Heart right ventricle (tissue), 16 donors: ENCODE measurements at regions of chr3 and their contacts with region 1.

Region 1: DNA sequence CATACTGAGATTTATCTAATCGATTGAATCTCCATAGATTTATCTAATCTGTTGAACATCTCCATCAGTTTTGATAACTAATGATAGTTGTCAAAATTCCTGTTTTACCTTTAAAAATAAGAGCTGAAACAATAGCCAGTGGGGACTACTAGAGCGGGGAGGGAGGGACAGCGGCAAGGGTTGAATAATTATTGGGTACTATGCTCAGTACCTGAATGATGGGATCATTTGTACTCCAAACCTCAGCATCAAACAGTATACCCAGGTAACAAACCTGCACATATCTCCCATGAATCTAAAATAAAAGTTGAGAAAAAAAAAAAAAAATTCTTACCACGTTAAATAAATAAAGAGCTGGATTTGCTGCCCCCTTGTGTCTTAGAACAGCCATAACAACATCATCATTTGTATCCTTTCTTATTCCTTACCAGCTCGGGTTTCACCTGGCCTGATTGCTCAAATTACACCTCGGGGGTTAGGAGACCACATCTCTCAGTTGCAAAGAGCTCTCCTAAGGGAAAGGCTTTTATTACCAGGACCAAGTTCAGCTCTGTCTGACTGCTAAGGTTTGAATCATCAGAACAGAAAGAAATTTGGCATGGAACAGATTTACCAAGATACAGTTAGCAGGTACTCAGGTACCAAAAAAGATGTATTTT is 25.7 kb upstream of the RPL39L start:
- DNase-seq: peak in 1 of 2 donors; percentile 45
- ATAC-seq: peak in 3 of 8 donors; percentile 38 to 52 (median 50)
- H3K4me3 ChIP-seq: no peak overlapping the region
- H3K27ac ChIP-seq: no peak overlapping the region
- H3K4me1 ChIP-seq: peaks cover 0 to 24% (median 4%) of the 10 kb centered on the region in 9 donors
- H3K27me3 ChIP-seq: no peaks in the 10 kb centered on the region
- CTCF ChIP-seq: peak; percentile 53 to 85 (median 78)

Region 2: DNA sequence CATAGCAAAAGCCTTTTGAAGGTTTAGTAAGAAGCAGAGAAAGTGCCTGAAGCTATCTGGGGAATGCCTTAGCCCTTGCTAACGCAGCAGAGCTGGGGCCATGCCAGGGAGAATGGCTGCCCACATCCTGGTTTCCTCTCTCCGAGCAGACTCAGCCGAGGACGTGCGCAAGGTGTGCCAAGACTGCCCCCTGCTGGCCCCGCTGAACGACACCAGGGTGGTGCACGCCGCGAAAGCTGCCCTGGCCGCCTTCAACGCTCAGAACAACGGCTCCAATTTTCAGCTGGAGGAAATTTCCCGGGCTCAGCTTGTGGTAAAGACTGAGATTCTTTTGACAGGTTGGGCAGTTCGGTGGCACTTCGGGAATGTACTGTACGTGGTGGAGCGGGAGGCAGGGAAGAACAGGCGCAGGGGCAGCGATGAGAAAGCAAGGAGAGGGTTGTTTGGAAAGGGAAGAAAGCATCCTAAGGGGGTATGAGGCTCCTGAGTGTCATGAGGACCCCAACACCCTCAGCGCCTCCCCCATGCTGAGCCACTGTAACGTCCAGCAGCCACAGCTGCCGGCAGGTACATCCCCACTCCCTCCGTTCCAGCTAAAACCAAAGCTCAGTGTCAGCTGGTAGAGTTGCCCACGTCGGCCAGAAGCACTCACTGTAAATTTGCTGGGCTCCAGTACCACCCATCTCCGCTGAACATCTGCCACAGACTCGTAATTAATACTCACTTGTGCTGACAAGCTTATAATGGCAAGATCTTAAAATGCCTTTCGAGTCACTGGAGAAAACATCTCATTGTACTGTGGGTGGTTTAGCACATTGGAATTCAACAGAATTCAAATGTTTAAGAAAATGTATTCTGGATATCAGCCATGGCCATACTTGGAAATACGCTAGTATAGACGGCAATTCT is 547.7 kb before region 1 on chr3:
- intact Hi-C with region 1: loop called in 1 of 10 experiments (anchors 10 kb)
- DNase-seq: peak; percentile 77 to 82
- ATAC-seq: peak; percentile 93 to 98 (median 96)
- H3K4me3 ChIP-seq: peak overlapping the region in 5 of 10 donors; percentile 18 to 27 (median 19)
- H3K27ac ChIP-seq: no peak overlapping the region
- H3K4me1 ChIP-seq: peaks cover 0 to 11% (median 6%) of the 10 kb centered on the region in 9 donors
- H3K27me3 ChIP-seq: peaks cover 0 to 50% (median 21%) of the 10 kb centered on the region in 7 donors
- CTCF ChIP-seq: peak; percentile 71 to 97 (median 85)

Region 3: DNA sequence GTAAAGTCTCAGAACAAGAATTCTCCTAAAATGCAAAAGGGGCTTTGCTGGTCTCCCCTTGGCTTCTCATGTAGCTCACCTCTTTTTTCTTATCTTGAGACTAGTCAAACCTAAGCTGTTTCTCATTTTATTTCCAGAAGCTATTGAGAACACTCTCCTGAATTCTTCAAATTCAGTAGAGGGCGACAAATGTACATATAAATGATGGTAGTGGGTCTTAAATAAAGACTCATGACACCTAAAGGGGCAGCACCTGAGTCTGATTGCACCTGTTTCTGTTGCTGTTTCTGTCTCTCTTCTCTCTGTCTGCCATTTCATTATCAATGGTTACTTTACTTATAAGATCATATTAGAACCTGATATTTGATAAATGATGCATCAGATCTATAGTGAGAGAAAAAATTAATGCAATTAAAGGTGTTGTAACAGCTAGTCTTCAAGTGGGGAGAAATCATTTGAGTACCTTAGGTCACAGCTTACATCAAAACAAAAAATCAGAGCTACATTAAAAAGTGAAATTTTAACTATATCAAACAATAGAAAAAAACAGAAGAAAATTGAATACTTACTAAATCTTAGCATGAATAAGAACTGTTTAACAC is 315.5 kb before region 1 on chr3:
- intact Hi-C with region 1: loop called (anchors 1 to 5 kb)
- DNase-seq: no peak
- ATAC-seq: peak in 6 of 8 donors; percentile 49 to 64 (median 60)
- H3K4me3 ChIP-seq: no peak overlapping the region
- H3K27ac ChIP-seq: no peak overlapping the region
- H3K4me1 ChIP-seq: no peaks in the 10 kb centered on the region
- H3K27me3 ChIP-seq: peaks cover 0 to 10% (median 3%) of the 10 kb centered on the region in 7 donors
- CTCF ChIP-seq: peak in 8 of 9 donors; percentile 20 to 78 (median 66)

Region 4: GRCh38 chr3:186921578-186921977 is 243.4 kb before region 1 on chr3:
- intact Hi-C with region 1: loop called in 2 of 10 experiments (anchors 10 kb)
- DNase-seq: no peak
- ATAC-seq: no peak
- H3K4me3 ChIP-seq: no peak overlapping the region
- H3K27ac ChIP-seq: no peak overlapping the region
- H3K4me1 ChIP-seq: peaks cover 0 to 7% (median 0%) of the 10 kb centered on the region in 9 donors
- H3K27me3 ChIP-seq: no peaks in the 10 kb centered on the region
- CTCF ChIP-seq: no peak

Region 5: GRCh38 chr3:187016639-187017345 is 148.2 kb before region 1 on chr3:
- intact Hi-C with region 1: no loop called
- DNase-seq: no peak
- ATAC-seq: peak in 3 of 8 donors; percentile 36 to 79 (median 63)
- H3K4me3 ChIP-seq: no peak overlapping the region
- H3K27ac ChIP-seq: peak overlapping the region in 4 of 10 donors; percentile 2 to 61 (median 40)
- H3K4me1 ChIP-seq: peaks cover 8 to 75% (median 66%) of the 10 kb centered on the region in 9 donors
- H3K27me3 ChIP-seq: no peaks in the 10 kb centered on the region
- CTCF ChIP-seq: no peak

Region 6: DNA sequence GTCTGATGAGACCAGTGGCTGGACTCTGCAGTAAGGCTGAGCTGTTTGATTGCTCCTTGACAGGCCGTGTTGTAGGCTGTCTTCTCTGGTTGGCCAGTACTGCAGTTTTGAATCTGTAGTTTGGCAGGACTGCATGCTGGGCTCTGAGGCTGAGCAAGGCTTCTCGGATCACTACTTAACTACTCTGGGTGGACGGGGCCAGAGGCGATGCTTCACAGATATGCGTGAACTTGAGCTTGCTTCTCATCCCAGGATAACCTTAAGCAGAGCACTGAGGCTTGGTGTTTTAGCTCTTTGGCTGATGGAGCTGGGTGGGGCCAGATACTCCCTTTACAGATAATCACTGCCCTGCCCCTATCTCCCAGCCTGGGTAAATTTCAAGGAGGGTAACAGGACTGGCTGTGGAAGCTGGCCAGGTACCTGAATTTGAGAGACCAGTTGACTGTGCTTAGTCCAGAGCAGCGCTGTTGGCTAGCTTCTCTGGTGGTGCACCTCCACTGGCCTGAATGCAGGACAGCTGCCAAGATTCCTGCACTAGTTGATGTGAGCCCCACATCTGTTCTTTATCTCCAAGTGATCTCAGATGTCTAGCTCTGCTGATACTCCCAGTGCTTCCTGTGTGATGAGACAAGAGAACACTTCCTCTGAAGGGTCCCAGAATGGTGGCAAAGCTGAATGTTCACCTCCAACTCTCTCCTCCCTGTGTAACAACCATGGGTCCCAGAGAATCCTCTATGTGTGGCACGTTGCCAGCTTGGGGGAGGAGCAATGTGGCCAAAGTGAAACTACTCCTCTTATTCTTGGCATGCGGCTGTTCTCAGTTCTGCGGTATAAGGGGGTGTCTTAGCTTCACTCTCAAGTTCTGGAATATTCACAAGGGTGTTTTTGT is 63.6 kb before region 1 on chr3:
- intact Hi-C with region 1: loop called in 1 of 10 experiments (anchors 10 kb)
- DNase-seq: peak; percentile 79 to 89
- ATAC-seq: peak; percentile 70 to 90 (median 79)
- H3K4me3 ChIP-seq: peak overlapping the region in 9 of 10 donors; percentile 3 to 36 (median 31)
- H3K27ac ChIP-seq: peak overlapping the region in 9 of 10 donors; percentile 34 to 64 (median 52)
- H3K4me1 ChIP-seq: peaks cover 0 to 42% (median 25%) of the 10 kb centered on the region in 9 donors
- H3K27me3 ChIP-seq: no peaks in the 10 kb centered on the region
- CTCF ChIP-seq: no peak

Region 7: DNA sequence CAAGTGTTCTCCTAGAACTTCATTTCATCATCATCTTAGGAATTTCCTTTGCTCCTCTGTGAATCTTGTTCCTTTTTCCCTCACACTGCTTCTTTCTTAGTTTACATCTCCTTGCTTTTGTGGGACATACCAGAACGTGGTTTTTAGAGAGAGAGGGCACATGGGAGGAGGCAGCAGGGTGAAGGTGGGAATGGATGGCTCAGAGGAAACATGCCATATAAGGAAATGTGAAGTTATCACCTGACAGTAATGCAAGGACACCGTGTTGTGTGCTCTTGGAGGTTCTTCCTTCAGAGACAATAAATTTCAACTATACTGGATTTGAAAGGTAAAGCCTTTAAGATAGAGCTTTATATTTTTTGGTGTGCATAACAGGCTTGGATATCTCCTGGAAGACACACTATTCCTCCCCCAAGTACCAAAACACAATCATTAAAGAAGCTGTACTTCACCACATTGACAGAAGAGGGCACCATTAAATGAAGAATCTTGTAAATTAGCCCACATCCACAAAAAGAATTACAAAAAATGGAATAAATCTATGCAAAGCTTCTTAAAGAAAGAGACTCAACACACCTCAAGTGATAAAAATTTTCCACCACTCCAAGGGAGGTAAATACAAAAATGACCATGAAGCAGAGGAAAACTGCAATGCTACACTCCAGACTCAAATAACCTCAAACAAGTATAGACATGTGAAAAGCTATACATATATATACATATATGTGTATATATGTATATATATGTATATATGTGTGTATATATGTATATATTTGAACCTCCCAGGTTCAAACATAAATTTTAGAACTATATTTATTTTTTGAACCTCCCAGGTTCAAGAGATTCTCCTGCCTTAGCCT is 51.9 kb before region 1 on chr3:
- intact Hi-C with region 1: loop called in 8 of 10 experiments (anchors 5 to 10 kb)
- DNase-seq: no peak
- ATAC-seq: no peak
- H3K4me3 ChIP-seq: no peak overlapping the region
- H3K27ac ChIP-seq: no peak overlapping the region
- H3K4me1 ChIP-seq: peaks cover 0 to 2% (median 0%) of the 10 kb centered on the region in 9 donors
- H3K27me3 ChIP-seq: no peaks in the 10 kb centered on the region
- CTCF ChIP-seq: peak; percentile 27 to 74 (median 63)

Region 8: GRCh38 chr3:187120326-187120725 is 44.7 kb before region 1 on chr3:
- intact Hi-C with region 1: loop called in 2 of 10 experiments (anchors 5 to 10 kb)
- DNase-seq: no peak
- ATAC-seq: peak in 1 of 8 donors; percentile 46
- H3K4me3 ChIP-seq: no peak overlapping the region
- H3K27ac ChIP-seq: no peak overlapping the region
- H3K4me1 ChIP-seq: no peaks in the 10 kb centered on the region
- H3K27me3 ChIP-seq: no peaks in the 10 kb centered on the region
- CTCF ChIP-seq: no peak